ENCODE measurements at regions of chr2 and their contacts with region 1.

Region 1: DNA sequence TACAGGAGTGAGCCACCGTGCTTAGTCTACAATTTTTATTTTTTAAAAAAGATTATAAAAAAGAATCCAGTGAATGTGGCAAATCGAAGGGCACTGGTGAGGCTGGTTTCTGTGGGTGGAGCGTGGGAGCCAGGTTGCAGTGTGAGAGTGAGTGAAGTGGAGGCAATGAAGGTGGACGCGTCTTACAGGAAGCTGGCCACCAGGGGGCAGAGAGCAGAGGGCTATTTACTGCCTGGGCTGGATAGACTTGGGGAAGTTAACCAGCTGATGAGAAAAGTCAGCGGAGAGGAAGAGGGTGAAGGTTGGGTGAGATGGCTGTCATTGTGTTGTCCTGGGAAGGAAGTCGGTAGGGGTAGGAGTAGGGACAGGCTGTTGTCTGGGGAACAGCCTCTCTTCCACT is 6.8 kb downstream of the SCTR start:
- DNase-seq: peak; percentile 62 to 71
- H3K4me3 ChIP-seq: no peak overlapping the region
- H3K4me3 Mint-ChIP-seq: no peak overlapping the region
- H3K27ac Mint-ChIP-seq: no peak overlapping the region
- H3K4me1 ChIP-seq: no peaks in the 10 kb centered on the region
- H3K4me1 Mint-ChIP-seq: no peaks in the 10 kb centered on the region
- H3K27me3 ChIP-seq: no peaks in the 10 kb centered on the region
- H3K27me3 Mint-ChIP-seq: peaks cover under 1% of the 10 kb centered on the region
- CTCF ChIP-seq: peak; percentile 54 to 74

Region 2: GRCh38 chr2:119494163-119494790 is 23.2 kb before region 1 on chr2:
- CTCF ChIA-PET with region 1: no interaction called
- POLR2A ChIA-PET with region 1: no interaction called
- intact Hi-C with region 1: no loop called
- DNase-seq: no peak
- H3K4me3 ChIP-seq: no peak overlapping the region
- H3K4me3 Mint-ChIP-seq: no peak overlapping the region
- H3K27ac Mint-ChIP-seq: no peak overlapping the region
- H3K4me1 ChIP-seq: peaks cover 37% of the 10 kb centered on the region
- H3K4me1 Mint-ChIP-seq: peaks cover 34% of the 10 kb centered on the region
- H3K27me3 ChIP-seq: no peaks in the 10 kb centered on the region
- H3K27me3 Mint-ChIP-seq: no peaks in the 10 kb centered on the region
- CTCF ChIP-seq: no peak

Region 3: DNA sequence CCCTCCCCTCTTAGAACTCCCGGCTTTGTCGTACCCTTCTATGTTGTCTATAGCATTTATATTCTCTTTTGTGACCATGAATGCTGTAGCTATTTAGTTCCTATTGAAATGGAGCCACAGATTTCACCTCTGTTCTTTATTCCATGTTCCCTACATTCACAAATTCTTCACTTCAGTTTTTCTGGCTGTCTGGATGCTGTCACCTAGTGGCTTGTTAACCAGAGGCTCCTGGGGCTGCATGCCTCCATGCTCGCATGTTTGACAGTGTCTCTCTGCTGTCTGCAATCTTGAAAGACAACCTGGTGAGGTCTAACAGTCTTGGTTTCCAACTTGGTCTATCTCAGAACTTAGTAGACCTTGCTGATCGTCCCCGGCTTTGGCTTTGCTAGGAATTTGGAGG is 75.0 kb after region 1 on chr2:
- CTCF ChIA-PET with region 1: no interaction called
- POLR2A ChIA-PET with region 1: no interaction called
- intact Hi-C with region 1: loop called (anchors 1 kb)
- DNase-seq: peak in 1 of 2 experiments; percentile 17
- H3K4me3 ChIP-seq: no peak overlapping the region
- H3K4me3 Mint-ChIP-seq: no peak overlapping the region
- H3K27ac Mint-ChIP-seq: no peak overlapping the region
- H3K4me1 ChIP-seq: no peaks in the 10 kb centered on the region
- H3K4me1 Mint-ChIP-seq: no peaks in the 10 kb centered on the region
- H3K27me3 ChIP-seq: no peaks in the 10 kb centered on the region; the same call in none of the 2 replicates
- H3K27me3 Mint-ChIP-seq: peaks cover 9% of the 10 kb centered on the region
- CTCF ChIP-seq: peak in 1 of 2 experiments; percentile 59

Region 4: DNA sequence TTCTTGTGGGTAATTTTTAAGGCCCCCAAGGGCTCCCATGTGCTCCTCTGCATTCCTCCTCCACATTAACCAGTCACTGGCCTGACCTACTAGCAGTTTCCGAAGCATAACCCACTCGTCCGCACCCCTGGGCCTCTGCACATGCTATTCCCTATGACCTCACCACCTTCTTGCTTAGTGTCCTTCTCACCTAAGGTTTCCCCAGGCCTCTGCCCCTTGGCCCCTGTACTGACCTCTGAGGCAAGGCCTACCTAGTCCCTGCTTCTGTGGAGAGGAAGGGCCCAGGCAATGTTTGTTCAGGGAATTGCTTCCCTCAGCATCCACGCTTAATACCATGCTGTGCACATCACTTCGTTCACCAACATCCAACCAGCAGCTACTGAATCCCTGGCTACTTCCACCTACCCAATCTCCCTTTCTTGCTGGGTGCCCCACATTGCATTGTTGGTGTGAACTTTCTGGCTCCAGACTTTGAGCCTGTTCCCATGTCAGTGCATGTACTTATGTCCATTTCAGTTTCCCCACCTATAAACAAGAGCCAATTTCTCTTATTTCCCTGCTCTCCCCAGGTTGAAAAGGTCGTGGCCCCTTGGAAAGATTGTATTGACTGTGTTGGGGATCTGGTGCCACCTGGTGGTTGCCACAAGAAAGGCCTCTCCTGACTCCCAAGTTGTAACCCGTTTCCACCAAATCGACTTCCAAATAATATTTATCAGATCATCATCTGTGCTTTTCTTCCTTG is 142.3 kb after region 1 on chr2:
- CTCF ChIA-PET with region 1: interaction called, 3 read pairs
- POLR2A ChIA-PET with region 1: no interaction called
- intact Hi-C with region 1: loop called (anchors 1 kb)
- DNase-seq: peak in 1 of 2 experiments; percentile 61
- H3K4me3 ChIP-seq: no peak overlapping the region
- H3K4me3 Mint-ChIP-seq: no peak overlapping the region
- H3K27ac Mint-ChIP-seq: no peak overlapping the region
- H3K4me1 ChIP-seq: no peaks in the 10 kb centered on the region
- H3K4me1 Mint-ChIP-seq: no peaks in the 10 kb centered on the region
- H3K27me3 ChIP-seq: no peaks in the 10 kb centered on the region; the same call in 1 of the 2 replicates
- H3K27me3 Mint-ChIP-seq: peaks cover 6% of the 10 kb centered on the region
- CTCF ChIP-seq: peak; percentile 84 to 90